MCF 10A (cell line): ENCODE measurements at regions of chr6 and their contacts with region 1.

Region 1: GRCh38 chr6:30877419-30878371 is 6.6 kb upstream of the DDR1 start:
- DNase-seq: peak; percentile 93
- H3K4me3 Mint-ChIP-seq: peak overlapping the region; percentile 61
- H3K27ac Mint-ChIP-seq: peak overlapping the region; percentile 95
- H3K4me1 Mint-ChIP-seq: peaks cover 40% of the 10 kb centered on the region
- H3K27me3 Mint-ChIP-seq: no peaks in the 10 kb centered on the region
- CTCF ChIP-seq: peak; percentile 90

Region 2: GRCh38 chr6:30686908-30687658 is 190.6 kb before region 1 on chr6:
- CTCF ChIA-PET with region 1: interaction called, 5 read pairs
- POLR2A ChIA-PET with region 1: interaction called, 16 read pairs
- intact Hi-C with region 1: loop called (anchors 2 kb)
- DNase-seq: peak; percentile 96
- H3K4me3 Mint-ChIP-seq: peak overlapping the region; percentile 94
- H3K27ac Mint-ChIP-seq: peak overlapping the region; percentile 80
- H3K4me1 Mint-ChIP-seq: peaks cover 66% of the 10 kb centered on the region
- H3K27me3 Mint-ChIP-seq: no peaks in the 10 kb centered on the region
- CTCF ChIP-seq: no peak

Region 3: GRCh38 chr6:30730601-30731435 is 146.9 kb before region 1 on chr6:
- CTCF ChIA-PET with region 1: interaction called, 10 read pairs
- POLR2A ChIA-PET with region 1: interaction called, 14 read pairs
- intact Hi-C with region 1: no loop called
- DNase-seq: peak; percentile 91
- H3K4me3 Mint-ChIP-seq: no peak overlapping the region
- H3K27ac Mint-ChIP-seq: no peak overlapping the region
- H3K4me1 Mint-ChIP-seq: peaks cover 7% of the 10 kb centered on the region
- H3K27me3 Mint-ChIP-seq: no peaks in the 10 kb centered on the region
- CTCF ChIP-seq: peak; percentile 86

Region 4: DNA sequence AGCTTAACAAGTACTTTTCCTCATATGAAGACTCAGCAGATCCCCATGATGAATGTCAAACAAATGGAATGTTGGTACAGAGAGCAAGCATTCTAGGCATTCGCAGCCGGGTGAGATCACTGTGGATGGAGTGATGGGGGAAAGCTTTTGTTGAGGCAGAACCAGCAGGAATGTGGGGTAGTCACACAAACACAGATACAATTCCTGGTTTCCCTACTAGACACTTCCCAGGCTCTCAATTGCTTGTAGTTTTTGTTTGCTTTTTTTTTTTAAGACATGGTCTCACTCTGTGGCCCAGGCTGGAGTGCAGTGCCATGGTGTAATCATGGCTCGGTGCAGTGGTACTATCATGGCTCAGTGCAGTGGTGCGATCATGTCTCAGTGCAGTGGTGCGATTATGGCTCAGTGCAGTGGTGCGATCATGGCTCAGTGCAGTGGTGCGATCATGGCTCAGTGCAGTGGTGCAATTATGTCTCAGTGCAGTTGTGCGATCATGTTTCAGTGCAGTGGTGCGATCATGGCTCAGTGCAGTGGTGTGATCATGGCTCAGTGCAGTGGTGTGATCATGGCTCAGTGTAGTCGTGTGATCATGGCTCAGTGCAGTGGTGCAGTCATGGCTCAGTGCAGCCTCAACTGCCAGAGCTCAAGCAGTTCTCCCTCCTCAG is 118.0 kb before region 1 on chr6:
- CTCF ChIA-PET with region 1: no interaction called
- POLR2A ChIA-PET with region 1: no interaction called
- intact Hi-C with region 1: no loop called
- DNase-seq: no peak
- H3K4me3 Mint-ChIP-seq: no peak overlapping the region
- H3K27ac Mint-ChIP-seq: no peak overlapping the region
- H3K4me1 Mint-ChIP-seq: peaks cover 21% of the 10 kb centered on the region
- H3K27me3 Mint-ChIP-seq: no peaks in the 10 kb centered on the region
- CTCF ChIP-seq: no peak

Region 5: DNA sequence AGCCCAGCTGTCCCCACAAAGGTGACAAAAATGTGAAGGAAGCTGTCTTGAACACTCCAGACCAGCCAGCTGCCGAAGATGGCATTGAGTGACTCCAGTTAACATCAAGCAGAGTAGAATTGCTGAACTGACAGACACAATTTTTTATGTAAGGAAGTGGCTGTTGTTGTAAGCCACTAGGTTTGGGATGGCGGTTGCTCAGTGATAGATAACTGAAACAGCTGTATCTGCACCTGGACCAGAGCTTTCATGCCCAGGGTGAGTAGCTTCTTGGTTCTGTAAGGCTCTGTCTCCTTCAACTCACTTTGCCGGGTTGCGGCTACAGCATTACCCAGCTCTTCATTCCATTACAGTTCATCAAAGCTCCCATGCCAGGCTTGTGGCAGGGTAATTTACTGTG is 43.1 kb before region 1 on chr6:
- CTCF ChIA-PET with region 1: interaction called, 92 read pairs
- POLR2A ChIA-PET with region 1: interaction called, 80 read pairs
- intact Hi-C with region 1: no loop called
- DNase-seq: no peak
- H3K4me3 Mint-ChIP-seq: no peak overlapping the region
- H3K27ac Mint-ChIP-seq: no peak overlapping the region
- H3K4me1 Mint-ChIP-seq: peaks cover 12% of the 10 kb centered on the region
- H3K27me3 Mint-ChIP-seq: no peaks in the 10 kb centered on the region
- CTCF ChIP-seq: no peak

Region 6: DNA sequence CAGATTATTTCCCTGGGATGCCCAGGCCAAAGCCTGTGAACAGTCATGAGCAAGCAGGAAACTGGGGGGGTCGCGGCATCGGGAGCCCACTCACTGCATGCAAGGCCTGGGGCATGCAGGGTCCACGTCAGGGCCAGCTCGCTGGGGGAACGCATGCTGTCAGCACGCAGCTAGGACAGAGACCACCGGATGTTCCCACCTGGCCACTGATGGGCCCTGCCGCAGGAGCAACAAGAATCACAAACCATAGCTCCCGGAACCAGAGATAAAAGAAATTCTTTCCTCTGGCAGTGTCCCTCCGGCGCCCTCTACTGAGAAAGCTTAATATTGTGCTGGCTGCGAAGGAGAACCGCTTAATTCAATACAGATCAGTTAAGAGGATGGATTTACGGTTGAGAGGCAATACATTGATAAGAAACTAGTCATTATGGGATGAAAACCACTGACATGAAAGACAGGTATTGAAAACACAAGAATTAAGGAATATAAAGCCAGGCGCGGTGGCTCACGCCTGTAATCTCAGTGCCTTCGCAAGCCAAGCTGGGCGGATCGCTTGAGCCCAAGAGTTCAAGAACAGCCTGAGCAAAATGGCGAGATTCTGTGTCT is 202.1 kb after region 1 on chr6:
- CTCF ChIA-PET with region 1: interaction called, 10 read pairs
- POLR2A ChIA-PET with region 1: interaction called, 4 read pairs
- intact Hi-C with region 1: no loop called
- DNase-seq: peak; percentile 69
- H3K4me3 Mint-ChIP-seq: no peak overlapping the region
- H3K27ac Mint-ChIP-seq: no peak overlapping the region
- H3K4me1 Mint-ChIP-seq: peaks cover 16% of the 10 kb centered on the region
- H3K27me3 Mint-ChIP-seq: no peaks in the 10 kb centered on the region
- CTCF ChIP-seq: peak; percentile 62

Region 7: DNA sequence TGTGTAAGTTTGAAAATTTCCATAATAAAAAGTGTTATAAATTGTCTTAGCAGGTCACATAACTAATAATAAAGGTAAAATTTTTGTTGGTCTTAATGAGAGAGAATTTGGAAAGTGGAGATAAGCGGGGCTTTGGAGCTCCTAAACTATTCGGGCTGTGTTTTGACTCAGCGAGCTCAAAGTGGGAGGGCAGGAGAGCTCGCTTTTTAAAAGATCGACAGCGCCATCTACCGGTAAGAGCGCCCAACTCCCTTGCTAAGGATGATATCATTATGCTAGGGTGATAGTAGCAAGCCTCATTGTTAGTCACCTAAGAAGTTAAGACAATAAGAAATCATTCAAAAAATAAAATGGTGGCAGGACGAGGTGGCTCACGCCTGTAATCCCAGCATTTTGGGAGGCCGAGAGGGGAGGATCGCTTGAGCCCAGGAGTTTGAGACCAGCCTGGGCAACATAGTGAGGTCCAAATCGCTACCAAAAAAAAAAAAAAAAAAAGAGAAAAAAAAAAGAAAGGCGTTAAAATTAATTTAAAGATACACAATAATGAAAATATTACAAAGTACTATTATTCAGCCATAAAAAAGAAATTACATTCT is 209.9 kb after region 1 on chr6:
- CTCF ChIA-PET with region 1: interaction called, 14 read pairs
- POLR2A ChIA-PET with region 1: interaction called, 6 read pairs
- intact Hi-C with region 1: no loop called
- DNase-seq: peak; percentile 91
- H3K4me3 Mint-ChIP-seq: no peak overlapping the region
- H3K27ac Mint-ChIP-seq: peak overlapping the region; percentile 16
- H3K4me1 Mint-ChIP-seq: peaks cover 21% of the 10 kb centered on the region
- H3K27me3 Mint-ChIP-seq: no peaks in the 10 kb centered on the region
- CTCF ChIP-seq: peak; percentile 65